ENCODE measurements at regions of chr3 and their contacts with region 1.

Region 1: DNA sequence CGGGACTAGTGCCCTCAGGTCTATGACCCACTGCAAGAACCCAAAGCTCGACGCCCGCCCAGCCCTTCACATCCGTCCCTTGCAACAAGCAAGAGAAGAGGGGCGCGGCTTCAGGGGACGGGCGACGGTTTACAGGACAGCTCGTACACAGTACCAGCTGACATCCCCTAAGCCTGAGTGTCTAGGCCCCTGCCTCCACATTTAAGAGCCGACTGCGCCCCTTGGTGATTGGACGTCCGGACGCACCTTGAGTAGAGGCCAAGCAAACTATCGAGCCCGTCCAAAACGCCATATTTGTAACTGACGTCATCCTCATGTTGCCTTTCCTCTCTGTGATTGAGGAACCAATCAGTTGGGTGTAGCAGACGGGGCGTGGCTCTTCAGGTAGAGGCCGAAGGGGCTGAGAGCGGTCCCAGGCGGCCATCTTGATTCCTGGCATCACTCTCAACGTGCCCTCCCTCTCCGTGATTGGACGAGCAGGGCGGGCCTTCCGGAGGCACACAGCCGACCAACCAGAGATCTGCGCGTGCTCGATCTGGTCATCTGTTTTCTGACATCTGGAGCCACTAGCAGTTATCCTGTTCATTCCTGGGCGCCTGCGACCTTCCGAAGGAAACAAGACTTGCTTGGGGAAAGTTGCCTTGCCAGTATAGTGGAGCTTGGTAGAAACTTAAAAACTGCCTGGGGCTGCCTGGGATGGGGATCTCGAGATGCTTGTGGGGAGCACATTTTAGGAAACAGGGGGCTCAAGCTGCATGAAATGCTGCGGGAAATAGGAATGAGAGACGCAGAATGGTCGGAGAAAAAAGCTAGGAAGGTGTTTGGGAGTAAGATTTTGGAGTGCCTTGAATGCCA is 4.0 kb upstream of the RPL14 start:
- DNase-seq: peak; percentile 99
- H3K4me3 Mint-ChIP-seq: peak overlapping the region; percentile 90
- H3K27ac Mint-ChIP-seq: peak overlapping the region; percentile 95
- H3K4me1 Mint-ChIP-seq: peaks cover 20% of the 10 kb centered on the region
- H3K27me3 Mint-ChIP-seq: no peaks in the 10 kb centered on the region
- CTCF ChIP-seq: no peak

Region 2: DNA sequence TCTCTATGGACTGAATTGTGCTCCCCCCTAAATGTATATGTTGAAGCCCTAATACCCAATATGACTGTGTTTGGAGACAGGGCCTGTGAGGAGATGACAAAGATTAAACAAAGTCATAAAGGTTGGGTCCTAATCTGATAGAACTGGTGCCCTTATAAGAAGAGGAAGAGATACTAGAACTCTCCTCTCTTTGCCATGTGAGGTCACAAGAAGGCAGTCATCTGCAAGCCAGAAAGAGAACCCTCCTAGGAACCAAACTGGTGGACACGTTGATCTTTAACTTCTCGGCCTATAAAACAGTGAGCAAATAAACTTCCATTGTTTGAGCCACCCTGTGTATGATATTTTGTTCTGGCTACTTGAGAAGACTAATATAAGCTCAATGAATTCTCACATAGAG is 97.7 kb before region 1 on chr3:
- CTCF ChIA-PET with region 1: no interaction called
- POLR2A ChIA-PET with region 1: no interaction called
- intact Hi-C with region 1: no loop called
- DNase-seq: no peak
- H3K4me3 Mint-ChIP-seq: no peak overlapping the region
- H3K27ac Mint-ChIP-seq: no peak overlapping the region
- H3K4me1 Mint-ChIP-seq: peaks cover 6% of the 10 kb centered on the region
- H3K27me3 Mint-ChIP-seq: no peaks in the 10 kb centered on the region
- CTCF ChIP-seq: no peak

Region 3: GRCh38 chr3:40437889-40438288 is 15.2 kb before region 1 on chr3:
- CTCF ChIA-PET with region 1: interaction called, 3 read pairs
- POLR2A ChIA-PET with region 1: interaction called, 12 read pairs
- intact Hi-C with region 1: no loop called
- DNase-seq: no peak
- H3K4me3 Mint-ChIP-seq: no peak overlapping the region
- H3K27ac Mint-ChIP-seq: no peak overlapping the region
- H3K4me1 Mint-ChIP-seq: no peaks in the 10 kb centered on the region
- H3K27me3 Mint-ChIP-seq: no peaks in the 10 kb centered on the region
- CTCF ChIP-seq: no peak

Region 4: GRCh38 chr3:40470701-40471100 is 17.6 kb after region 1 on chr3:
- CTCF ChIA-PET with region 1: interaction called, 3 read pairs
- POLR2A ChIA-PET with region 1: interaction called, 15 read pairs
- intact Hi-C with region 1: no loop called
- DNase-seq: no peak
- H3K4me3 Mint-ChIP-seq: no peak overlapping the region
- H3K27ac Mint-ChIP-seq: no peak overlapping the region
- H3K4me1 Mint-ChIP-seq: no peaks in the 10 kb centered on the region
- H3K27me3 Mint-ChIP-seq: no peaks in the 10 kb centered on the region
- CTCF ChIP-seq: no peak

Region 5: DNA sequence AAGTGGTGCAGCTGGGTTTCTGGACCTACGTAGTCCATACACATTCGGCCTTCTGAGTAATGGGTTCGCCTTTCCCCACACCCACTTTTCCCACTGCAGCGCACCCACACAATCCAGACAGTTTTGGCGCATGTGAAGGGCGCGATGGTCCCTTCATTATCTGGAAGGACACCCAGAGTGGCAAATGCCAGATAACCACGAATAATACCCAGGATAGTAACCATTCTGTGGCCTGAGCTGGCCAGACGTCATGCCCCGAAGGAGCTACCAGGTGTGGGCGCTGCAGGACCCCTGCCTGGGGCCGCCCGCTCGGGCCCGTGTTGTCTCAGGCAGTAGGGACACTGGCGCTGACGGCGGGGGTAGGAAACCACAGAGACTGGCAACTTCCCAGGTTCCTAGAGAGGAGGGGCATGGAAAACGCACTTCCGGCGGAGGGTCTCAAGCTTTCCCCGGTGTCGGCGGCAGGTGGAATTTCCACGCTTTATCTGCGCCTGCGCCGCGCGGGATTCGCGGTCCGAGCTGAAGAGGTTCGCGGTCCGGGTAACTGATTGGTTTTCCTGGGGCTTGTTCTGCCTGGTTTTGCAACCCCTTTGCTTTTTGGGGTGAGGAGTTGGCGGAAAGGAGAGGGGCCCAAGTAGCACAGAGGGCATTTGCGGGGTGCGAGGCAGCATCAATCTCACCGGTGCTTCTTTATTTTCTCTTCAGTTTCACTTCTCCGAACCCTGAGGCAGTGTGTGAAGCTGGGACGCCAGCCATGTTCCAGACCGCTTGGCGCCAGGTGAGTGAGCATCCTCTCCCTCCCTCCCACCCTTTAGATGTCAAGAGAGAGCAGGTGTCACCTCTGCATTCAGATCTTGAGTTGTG is 52.7 kb after region 1 on chr3 and contains the start of gene ZNF620:
- CTCF ChIA-PET with region 1: interaction called, 4 read pairs
- POLR2A ChIA-PET with region 1: interaction called, 41 read pairs
- intact Hi-C with region 1: loop called (anchors 2 kb)
- DNase-seq: peak; percentile 48
- H3K4me3 Mint-ChIP-seq: peak within 1 kb of the TSS; percentile 77
- H3K27ac Mint-ChIP-seq: peak within 1 kb of the TSS; percentile 70
- H3K4me1 Mint-ChIP-seq: peaks cover 13% of the 10 kb centered on the region
- H3K27me3 Mint-ChIP-seq: no peaks in the 10 kb centered on the region
- CTCF ChIP-seq: no peak
- total RNA-seq, gene ZNF620: 2.8 and 2.9 TPM in 2 replicates